BJ (cell line): ENCODE measurements at regions of chr21 and their contacts with region 1.

Region 1: DNA sequence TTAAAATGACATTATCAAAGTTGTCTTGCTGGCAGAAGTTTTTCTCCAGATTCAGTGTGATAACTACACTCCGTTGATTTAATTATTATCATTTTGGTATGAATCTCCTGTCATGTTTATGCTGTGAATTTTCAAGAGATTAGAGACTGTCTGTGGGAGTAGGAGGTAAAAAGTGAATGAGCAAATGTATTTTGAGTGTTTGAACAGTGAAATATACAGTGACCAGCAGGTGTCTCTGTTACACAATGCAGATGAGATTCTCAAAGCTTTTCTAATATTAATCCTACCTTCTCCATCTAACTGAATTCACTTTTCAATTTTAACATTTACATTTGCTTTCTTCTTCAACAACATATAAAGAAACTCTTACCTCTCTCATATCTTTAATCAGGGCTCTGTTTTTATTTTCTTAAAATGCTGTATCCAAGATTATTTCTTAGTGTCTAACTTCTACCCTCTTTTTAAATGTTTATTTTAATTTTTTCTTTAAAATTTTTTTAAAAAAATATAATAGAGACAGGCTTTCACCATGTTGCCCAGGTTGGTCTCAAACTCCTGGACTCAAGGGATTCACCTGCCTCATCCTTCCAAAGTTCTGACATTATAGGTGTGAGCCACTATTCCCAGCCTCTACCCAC is 20.9 kb upstream of the HSPA13 start:
- DNase-seq: no peak
- H3K4me3 ChIP-seq: no peak overlapping the region
- H3K27me3 ChIP-seq: no peaks in the 10 kb centered on the region
- CTCF ChIP-seq: peak; percentile 51

Region 2: GRCh38 chr21:14797543-14797942 is 393.7 kb after region 1 on chr21:
- CTCF ChIA-PET with region 1: no interaction called
- POLR2A ChIA-PET with region 1: no interaction called
- DNase-seq: no peak
- H3K4me3 ChIP-seq: no peak overlapping the region
- H3K27me3 ChIP-seq: no peaks in the 10 kb centered on the region
- CTCF ChIP-seq: no peak

Region 3: DNA sequence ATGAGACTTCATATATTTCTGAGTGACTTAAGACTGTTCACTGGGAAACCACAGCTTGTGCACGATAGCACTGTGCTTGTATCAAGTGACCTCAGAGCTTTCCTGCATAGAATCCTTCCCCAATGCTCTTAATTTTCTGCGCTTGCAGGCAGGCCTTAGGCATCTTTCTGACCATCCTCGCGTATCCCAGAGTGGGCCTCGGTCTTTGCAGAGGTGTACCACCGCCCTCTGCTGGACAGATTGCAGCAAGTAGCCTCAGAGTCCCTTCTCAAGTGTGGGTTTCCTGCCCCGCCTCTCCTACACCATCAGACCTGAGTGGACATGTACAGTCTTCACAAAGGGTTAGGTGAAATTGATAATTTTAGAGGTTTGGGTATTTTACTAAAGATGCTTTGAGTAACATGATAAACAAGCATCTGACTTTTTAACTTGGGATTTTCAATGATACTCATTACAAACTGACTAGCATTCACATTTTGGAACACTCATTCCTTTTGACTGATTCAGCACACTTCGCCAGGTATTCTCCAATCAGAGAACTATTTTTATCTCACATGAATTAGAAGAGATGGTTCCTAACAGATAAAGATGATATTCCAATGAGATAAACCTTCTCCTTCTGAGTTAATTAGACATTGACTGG is 1079.5 kb after region 1 on chr21:
- CTCF ChIA-PET with region 1: interaction called, 11 read pairs
- POLR2A ChIA-PET with region 1: no interaction called
- DNase-seq: peak; percentile 23
- H3K4me3 ChIP-seq: no peak overlapping the region
- H3K27me3 ChIP-seq: no peaks in the 10 kb centered on the region
- CTCF ChIP-seq: peak; percentile 92